Left ventricle myocardium superior (tissue), 1 donor: ENCODE measurements at regions of chr18 and their contacts with region 1.

Region 1: DNA sequence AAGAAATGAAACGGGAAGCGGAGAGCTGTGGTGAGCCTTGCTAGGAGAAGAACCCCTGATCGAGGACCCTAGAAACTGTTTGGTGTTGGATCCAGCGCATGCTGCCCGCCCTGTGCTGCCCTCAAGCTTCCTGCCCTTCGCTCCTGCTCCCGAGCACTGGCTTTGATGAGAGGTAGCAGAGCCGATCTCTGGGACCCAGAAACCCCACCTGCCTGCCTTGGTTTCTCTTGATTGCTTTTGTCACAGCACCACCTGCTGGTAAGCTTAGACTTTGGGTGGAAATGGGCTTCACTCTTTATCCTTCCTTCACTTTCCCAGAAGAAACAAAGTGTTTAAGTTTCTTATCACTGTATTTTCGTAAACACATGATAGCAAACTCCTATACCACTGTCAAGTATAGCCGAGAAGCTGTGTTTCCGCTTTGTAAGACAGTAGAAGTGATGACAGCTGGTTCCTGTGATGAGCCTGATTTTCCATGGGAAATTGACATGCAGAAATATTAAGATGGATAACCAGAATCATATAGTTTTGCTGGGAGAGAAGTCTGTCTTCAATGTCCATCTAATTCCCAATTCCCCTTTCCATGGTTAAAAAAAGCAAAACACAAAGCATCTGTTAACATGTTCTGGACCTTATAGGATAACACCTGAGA is 267.4 kb downstream of the PHLPP1 start:
- DNase-seq: peak; percentile 51
- ATAC-seq: peak; percentile 83

Region 2: DNA sequence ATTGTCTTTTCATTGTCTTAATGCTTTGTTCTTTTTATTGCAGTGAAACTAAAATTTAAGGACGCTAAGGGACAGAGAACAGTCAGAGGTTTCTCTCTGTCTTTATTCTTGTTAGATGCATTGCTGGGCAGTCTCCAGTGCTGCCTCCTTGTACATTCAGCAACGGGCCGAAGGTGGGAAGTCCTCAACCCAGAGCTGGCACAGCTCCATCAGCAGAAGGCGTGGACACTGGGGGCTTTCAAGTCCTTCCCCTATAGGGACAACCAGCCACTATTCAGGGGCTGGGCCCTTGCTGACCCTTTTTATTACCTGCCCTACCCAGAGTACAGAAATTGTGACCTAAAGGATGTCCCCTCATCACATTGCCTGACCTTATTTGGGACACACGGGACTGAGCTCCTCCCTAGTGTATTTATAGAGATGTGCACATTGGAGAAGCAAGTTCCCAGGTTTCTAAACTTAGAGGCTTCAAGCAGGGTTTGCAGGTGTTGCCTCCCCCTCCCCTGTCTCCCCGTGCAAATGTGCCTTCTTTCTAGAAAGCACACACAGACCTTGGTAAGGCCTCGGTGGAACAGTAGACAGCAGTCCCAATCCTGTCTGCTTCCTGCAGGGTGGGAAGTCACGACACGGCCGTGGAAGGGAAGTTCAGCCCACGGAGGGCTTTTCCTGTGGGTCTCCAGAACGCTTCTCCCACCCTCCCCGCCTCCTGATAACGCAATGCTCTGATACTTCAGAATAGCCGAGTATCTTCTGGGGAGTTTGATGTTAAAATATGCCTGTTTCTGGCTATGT is 391.7 kb before region 1 on chr18:
- intact Hi-C with region 1: loop called (anchors 5 kb)
- DNase-seq: no peak
- ATAC-seq: peak; percentile 74

Region 3: GRCh38 chr18:62714671-62715435 is 267.9 kb before region 1 on chr18:
- intact Hi-C with region 1: loop called (anchors 5 kb)
- DNase-seq: peak; percentile 99
- ATAC-seq: peak; percentile 96

Region 4: DNA sequence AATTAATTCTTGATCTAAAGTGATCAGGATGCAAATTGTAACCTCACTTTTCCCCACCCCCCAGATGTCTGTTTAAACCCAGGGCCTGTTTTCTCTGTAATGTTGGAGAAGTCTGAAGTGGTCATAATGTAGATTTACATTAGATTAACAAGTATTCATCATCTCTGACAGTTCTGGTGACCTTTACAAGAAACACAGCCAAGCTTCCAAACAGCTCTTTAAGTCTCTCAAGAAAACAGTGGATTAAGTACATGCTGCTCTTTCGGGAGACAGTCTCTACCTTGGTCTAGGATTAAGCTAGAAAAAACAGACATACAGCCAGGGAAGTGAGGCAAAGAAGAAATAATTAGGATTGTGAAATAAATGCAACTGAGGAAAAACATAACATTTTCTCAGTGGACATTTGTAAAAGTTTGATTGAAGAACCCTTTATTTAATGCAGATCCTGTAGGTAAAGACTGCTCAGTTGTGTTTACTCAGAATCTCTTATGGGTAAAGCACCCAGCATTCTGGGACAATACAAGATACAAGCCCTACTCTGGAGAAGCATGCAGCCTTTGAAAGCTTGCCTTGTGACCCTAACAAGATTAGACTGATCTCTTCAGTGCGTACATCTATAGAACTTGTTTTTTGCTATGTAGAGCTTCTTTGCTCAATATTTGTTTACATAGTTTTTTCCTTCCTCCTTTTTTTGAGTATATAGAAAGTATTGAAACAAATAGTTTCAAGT is 63.5 kb before region 1 on chr18:
- intact Hi-C with region 1: no loop called
- DNase-seq: no peak
- ATAC-seq: no peak

Region 5: DNA sequence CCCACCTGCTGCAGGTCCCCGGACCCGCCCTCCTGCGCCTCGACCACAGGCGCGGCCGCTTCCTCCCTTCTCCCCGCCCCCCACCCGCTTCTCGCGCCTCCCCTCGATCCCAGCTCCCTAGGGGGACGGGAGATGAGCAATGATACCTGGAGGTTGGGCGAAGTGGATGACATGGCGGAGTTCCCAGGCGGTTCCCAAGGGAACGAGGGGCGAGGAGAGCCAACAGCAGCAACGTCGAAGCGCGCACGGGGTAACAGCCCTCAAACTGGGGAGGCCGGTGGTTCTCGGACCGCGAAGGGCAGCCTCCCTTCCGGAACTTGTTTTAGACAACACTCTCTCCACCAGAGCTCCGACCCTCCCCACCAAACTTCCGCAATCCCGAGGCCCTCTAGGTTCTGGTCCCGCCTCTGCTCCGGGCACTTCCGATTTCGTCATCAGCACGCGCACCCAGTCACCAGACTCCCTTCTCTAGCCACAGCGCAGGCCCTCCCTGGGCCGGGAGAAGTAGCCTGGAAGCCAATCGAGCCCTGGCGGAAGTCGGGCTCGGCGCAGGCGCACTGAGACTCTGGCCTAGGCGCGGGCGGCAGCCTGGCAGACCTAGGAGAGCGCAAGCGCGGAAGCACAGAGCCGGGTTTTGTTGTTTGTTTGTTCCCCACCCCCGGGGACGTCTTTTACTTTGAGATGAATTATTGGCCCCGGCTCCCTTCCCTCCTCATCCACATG is 439.5 kb after region 1 on chr18 and contains the start of gene VPS4B:
- intact Hi-C with region 1: no loop called
- DNase-seq: peak; percentile 100
- ATAC-seq: peak; percentile 99
- total RNA-seq, gene VPS4B: 20.6 TPM